Activated naive CD4-positive, alpha-beta T cell treated with anti-CD3 and anti-CD28 coated beads for 36 hours (primary cell): ENCODE measurements at regions of chr2 and their contacts with region 1.

Region 1: GRCh38 chr2:8469709-8470493 is 212.0 kb upstream of the ID2 start:
- DNase-seq: no peak
- H3K4me3 Mint-ChIP-seq: no peak overlapping the region
- H3K27ac Mint-ChIP-seq: no peak overlapping the region
- H3K4me1 Mint-ChIP-seq: peaks cover 30% of the 10 kb centered on the region
- H3K27me3 Mint-ChIP-seq: no peaks in the 10 kb centered on the region

Region 2: GRCh38 chr2:8337321-8337720 is 132.6 kb before region 1 on chr2:
- CTCF ChIA-PET with region 1: no interaction called
- intact Hi-C with region 1: loop called (anchors 2 kb)
- DNase-seq: peak; percentile 56
- H3K4me3 Mint-ChIP-seq: no peak overlapping the region
- H3K27ac Mint-ChIP-seq: peak overlapping the region; percentile 14
- H3K4me1 Mint-ChIP-seq: peaks cover 15% of the 10 kb centered on the region
- H3K27me3 Mint-ChIP-seq: no peaks in the 10 kb centered on the region